Tibial artery (tissue), 4 donors: ENCODE measurements at regions of chr10 and their contacts with region 1.

Region 1: DNA sequence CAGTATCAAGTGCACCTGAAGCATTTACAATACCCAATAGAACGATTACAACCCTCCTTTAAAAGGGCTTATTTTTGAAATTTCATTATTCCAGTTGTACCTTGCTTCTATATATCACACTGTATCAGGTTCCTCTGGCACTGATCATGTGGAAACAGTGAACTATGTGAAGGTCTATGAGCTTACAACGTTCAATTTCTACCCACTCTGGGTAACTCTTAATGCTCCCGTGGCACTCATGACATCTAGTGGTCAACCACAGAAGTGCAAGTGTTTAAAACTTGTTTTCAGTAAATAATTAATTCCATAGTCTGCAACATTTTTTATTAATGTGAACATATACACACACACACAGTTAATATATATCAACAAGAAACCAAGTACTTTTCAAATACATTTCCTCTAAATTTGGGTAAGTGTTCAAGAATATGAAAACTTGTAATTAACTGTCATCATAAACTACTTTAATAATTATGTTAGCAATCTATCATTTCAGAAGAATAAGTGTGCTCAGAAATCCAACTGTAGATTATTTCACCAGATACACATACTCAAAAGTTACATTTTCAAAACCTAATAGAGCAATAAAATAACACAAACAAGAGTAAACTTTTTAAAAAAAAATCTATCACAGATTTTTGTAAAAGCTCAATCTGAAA is 61.0 kb downstream of the MPP7 start:
- DNase-seq: no peak
- H3K4me3 ChIP-seq: no peak overlapping the region
- H3K27ac ChIP-seq: no peak overlapping the region
- H3K4me1 ChIP-seq: peaks cover 0 to 35% (median 1%) of the 10 kb centered on the region in 4 donors
- H3K27me3 ChIP-seq: no peaks in the 10 kb centered on the region
- CTCF ChIP-seq: peak; percentile 88 to 94

Region 2: GRCh38 chr10:27446091-27446918 is 795.6 kb before region 1 on chr10:
- intact Hi-C with region 1: loop called (anchors 10 kb)
- DNase-seq: no peak
- H3K4me3 ChIP-seq: no peak overlapping the region
- H3K27ac ChIP-seq: no peak overlapping the region
- H3K4me1 ChIP-seq: no peaks in the 10 kb centered on the region
- H3K27me3 ChIP-seq: no peaks in the 10 kb centered on the region
- CTCF ChIP-seq: peak; percentile 34 to 46